Dendritic cell treated with granulocyte-macrophage colony-stimulating factor and Interleukin-4, amounts not matched to agents 40 ng/mL and 50 ng/mL, for 4 days (primary cell): ENCODE measurements at regions of chr3 and their contacts with region 1.

Region 1: GRCh38 chr3:13648060-13649001 is 99.4 kb downstream of the FBLN2 start:
- H3K4me3 Mint-ChIP-seq: no peak overlapping the region
- H3K27ac Mint-ChIP-seq: no peak overlapping the region
- H3K4me1 Mint-ChIP-seq: peaks cover 21% of the 10 kb centered on the region
- H3K27me3 Mint-ChIP-seq: peaks cover 51% of the 10 kb centered on the region

Region 2: GRCh38 chr3:13091898-13092611 is 556.3 kb before region 1 on chr3:
- intact Hi-C with region 1: loop called (anchors 5 kb)
- H3K4me3 Mint-ChIP-seq: no peak overlapping the region
- H3K27ac Mint-ChIP-seq: no peak overlapping the region
- H3K4me1 Mint-ChIP-seq: peaks cover 32% of the 10 kb centered on the region
- H3K27me3 Mint-ChIP-seq: peaks cover 43% of the 10 kb centered on the region

Region 3: GRCh38 chr3:13495921-13496723 is 152.2 kb before region 1 on chr3:
- intact Hi-C with region 1: loop called (anchors 1 kb)
- H3K4me3 Mint-ChIP-seq: no peak overlapping the region
- H3K27ac Mint-ChIP-seq: peak overlapping the region; percentile 12
- H3K4me1 Mint-ChIP-seq: peaks cover 16% of the 10 kb centered on the region
- H3K27me3 Mint-ChIP-seq: no peaks in the 10 kb centered on the region

Region 4: DNA sequence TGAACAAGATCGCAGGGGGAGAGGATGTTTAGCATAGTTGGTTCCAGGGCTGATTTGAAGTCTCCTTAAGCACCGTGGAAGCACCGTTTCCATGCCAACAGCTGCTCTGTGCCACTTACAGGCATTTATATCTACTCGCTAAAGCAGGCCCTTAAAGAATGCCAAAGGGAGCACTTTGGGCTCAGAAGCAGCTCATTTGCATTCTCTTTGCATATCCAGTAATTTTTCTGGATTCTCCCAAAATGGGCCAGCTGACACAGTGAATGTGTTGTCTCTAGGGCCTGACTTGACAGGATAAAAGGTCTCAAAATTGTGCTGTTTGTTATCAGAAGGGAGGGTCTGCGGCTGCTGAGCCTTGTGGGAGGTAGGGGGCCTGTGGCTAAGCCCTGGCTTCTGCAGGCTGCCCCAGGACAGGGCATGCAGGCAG is 39.2 kb after region 1 on chr3:
- intact Hi-C with region 1: no loop called
- H3K4me3 Mint-ChIP-seq: no peak overlapping the region
- H3K27ac Mint-ChIP-seq: no peak overlapping the region
- H3K4me1 Mint-ChIP-seq: no peaks in the 10 kb centered on the region
- H3K27me3 Mint-ChIP-seq: no peaks in the 10 kb centered on the region